ENCODE measurements at regions of chr9 and their contacts with region 1.

Region 1: GRCh38 chr9:34185778-34186551 is 7.1 kb downstream of the UBAP1 start:
- DNase-seq: peak; percentile 67
- CTCF ChIP-seq: no peak

Region 2: GRCh38 chr9:34237836-34238235 is 51.9 kb after region 1 on chr9:
- in situ Hi-C with region 1: loop called (anchors 5 kb)
- DNase-seq: no peak
- CTCF ChIP-seq: no peak